ENCODE measurements at regions of chr19 and their contacts with region 1.

Region 1: DNA sequence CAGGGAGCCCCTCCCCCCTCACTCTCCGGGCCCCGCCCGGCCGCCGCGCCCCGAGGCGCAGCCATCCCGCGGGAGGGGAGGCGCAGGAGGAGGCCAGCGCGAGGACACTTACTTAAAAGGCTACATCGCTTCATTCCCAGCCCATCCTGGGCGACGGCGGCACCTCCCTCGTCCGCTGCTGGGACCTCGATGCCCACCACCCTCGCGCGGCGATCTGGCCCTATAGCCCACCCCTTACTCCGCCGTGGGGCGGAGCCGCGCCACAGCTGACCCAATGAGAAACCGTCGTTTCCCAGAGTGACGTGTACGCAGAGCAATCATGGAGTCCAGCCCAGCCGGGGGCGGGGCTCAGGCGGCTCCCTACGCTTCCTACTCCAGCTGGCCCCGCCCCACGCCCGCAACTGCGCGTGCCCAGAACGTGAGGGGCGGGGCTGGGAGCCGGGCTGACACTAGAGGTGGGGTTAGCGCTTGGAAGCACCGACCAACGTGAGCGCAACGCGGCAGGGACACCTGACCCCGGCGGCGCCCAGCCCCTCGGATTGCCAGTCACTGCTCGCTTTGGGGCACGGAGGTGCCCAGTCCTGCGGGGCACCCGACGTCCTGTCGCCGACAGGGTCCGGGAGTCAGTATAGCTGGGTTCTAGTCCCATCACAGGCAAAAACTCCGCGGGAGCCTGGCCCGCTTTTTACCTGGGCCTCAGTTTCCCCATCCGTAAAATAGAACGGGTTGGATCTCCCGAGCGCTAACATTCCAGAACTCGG is at the start of gene ANKRD27:
- DNase-seq: peak; percentile 98 to 99 (median 98)
- ATAC-seq: peak; percentile 95
- H3K4me3 ChIP-seq: peak within 1 kb of the TSS; percentile 92
- H3K27ac ChIP-seq: peak within 1 kb of the TSS; percentile 79
- H3K4me1 ChIP-seq: peaks cover 41 to 61% of the 10 kb centered on the region in 2 experiments
- H3K27me3 ChIP-seq: no peaks in the 10 kb centered on the region
- CTCF ChIP-seq: 0 out of 6 replicates have a peak, but pooled peaks of 1 of the 3 experiments have one; percentile 0
- EP300 ChIP-seq: no peak
- POLR2A ChIP-seq: peak; percentile 73
- RAD21 ChIP-seq: no peak
- polyA plus RNA-seq, gene ANKRD27: 5.3 to 7.2 TPM

Region 2: DNA sequence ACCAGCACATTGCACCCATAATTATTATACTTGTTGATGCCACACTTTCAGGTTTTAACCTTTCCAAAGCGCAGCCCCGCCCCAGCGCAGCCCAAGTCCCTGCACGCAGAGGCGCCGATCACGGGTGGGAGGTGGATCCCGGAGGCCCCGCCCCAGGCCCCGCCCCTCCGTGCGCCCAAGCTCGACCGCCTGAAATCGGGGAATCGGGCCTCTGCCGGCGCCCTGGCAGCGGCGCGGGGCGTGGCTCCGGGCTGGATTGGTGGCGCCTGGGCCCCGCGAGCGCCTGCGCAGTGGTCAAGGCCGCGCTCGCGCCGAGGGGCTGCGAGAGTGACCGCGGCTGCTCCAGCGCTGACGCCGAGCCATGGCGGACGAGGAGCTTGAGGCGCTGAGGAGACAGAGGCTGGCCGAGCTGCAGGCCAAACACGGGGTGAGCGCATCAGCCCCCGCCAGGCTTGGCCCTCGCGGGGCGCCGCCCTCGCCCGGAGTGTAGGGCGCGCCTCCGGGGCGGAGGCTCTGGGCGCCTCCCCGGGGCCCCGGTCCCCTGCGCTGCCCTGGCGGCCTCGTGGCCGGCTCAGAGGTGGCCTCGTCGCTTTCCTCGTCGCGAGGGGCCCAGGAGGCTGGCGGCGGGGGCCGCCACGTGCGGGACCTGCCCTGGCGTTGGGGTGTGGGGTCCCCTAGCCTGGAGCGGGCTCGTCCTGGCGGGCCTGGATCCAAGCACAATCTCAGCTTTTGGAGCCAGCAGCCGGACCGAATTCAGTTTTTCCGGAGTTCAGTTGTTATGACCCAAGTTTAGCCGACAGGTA is 94.0 kb before region 1 on chr19 and contains the start of gene PDCD5:
- CTCF ChIA-PET with region 1: no interaction called
- POLR2A ChIA-PET with region 1: no interaction called
- in situ Hi-C with region 1: no loop called
- intact Hi-C with region 1: loop called (anchors 5 kb)
- DNase-seq: peak; percentile 94 to 97 (median 96)
- ATAC-seq: peak; percentile 96
- H3K4me3 ChIP-seq: peak within 1 kb of the TSS; percentile 77
- H3K27ac ChIP-seq: peak within 1 kb of the TSS; percentile 88
- H3K4me1 ChIP-seq: peaks cover 6 to 16% of the 10 kb centered on the region in 2 experiments; a peak in 4 of 5 replicates
- H3K27me3 ChIP-seq: no peaks in the 10 kb centered on the region
- CTCF ChIP-seq: no peak
- EP300 ChIP-seq: no peak
- POLR2A ChIP-seq: peak; percentile 82
- RAD21 ChIP-seq: no peak
- polyA plus RNA-seq, gene PDCD5: 136 to 185 TPM

Region 3: DNA sequence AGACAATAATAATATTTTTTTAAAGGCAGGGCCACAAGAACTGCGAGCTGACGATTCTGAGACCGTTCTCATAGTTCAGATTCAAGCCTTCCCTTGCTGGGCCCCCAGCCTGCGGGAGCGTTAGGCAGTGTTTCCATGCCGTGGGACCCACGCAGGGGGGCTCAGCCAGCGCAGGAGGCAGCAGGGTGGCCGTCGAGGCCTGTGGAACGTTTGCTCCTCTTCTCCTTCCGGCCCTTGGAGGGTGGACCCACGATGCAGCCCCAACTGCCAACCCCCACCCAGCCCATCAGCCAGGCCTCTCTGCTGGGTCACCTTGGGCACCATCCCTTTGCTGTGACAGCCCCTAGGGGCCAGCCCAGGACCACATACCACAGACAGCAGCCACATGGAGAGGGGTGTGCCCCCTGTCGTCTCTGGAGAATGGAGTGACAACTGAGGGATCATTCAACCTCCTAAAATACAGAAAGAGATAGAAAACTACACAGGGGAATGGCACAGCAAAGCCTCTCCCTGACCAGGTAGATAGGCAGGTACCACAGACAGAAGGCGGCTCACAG is 47.3 kb before region 1 on chr19:
- CTCF ChIA-PET with region 1: no interaction called
- POLR2A ChIA-PET with region 1: no interaction called
- in situ Hi-C with region 1: no loop called
- intact Hi-C with region 1: loop called (anchors 1 kb)
- DNase-seq: peak in 2 of 4 experiments; percentile 9 to 27
- ATAC-seq: peak; percentile 42
- H3K4me3 ChIP-seq: no peak overlapping the region
- H3K27ac ChIP-seq: peak overlapping the region; percentile 75
- H3K4me1 ChIP-seq: peaks cover 17 to 41% of the 10 kb centered on the region in 2 experiments; a peak in 4 of 5 replicates
- H3K27me3 ChIP-seq: no peaks in the 10 kb centered on the region
- CTCF ChIP-seq: peak in 1 of 3 experiments; percentile 50; a peak in 2 of 6 replicates
- EP300 ChIP-seq: no peak
- POLR2A ChIP-seq: no peak
- RAD21 ChIP-seq: no peak

Region 4: GRCh38 chr19:32691291-32691951 is 16.3 kb after region 1 on chr19 and contains the start of gene NUDT19:
- CTCF ChIA-PET with region 1: no interaction called
- POLR2A ChIA-PET with region 1: interaction called, 11 read pairs
- in situ Hi-C with region 1: no loop called
- intact Hi-C with region 1: loop called (anchors 1 kb)
- DNase-seq: peak; percentile 79 to 90 (median 82)
- ATAC-seq: peak; percentile 88
- H3K4me3 ChIP-seq: peak within 1 kb of the TSS; percentile 73
- H3K27ac ChIP-seq: peak within 1 kb of the TSS; percentile 86
- H3K4me1 ChIP-seq: peaks cover 22 to 35% of the 10 kb centered on the region in 2 experiments; a peak in 4 of 5 replicates
- H3K27me3 ChIP-seq: no peaks in the 10 kb centered on the region
- CTCF ChIP-seq: no peak
- EP300 ChIP-seq: no peak
- POLR2A ChIP-seq: peak; percentile 84
- RAD21 ChIP-seq: no peak
- polyA plus RNA-seq, gene NUDT19: 28.2 to 38.6 TPM

Region 5: DNA sequence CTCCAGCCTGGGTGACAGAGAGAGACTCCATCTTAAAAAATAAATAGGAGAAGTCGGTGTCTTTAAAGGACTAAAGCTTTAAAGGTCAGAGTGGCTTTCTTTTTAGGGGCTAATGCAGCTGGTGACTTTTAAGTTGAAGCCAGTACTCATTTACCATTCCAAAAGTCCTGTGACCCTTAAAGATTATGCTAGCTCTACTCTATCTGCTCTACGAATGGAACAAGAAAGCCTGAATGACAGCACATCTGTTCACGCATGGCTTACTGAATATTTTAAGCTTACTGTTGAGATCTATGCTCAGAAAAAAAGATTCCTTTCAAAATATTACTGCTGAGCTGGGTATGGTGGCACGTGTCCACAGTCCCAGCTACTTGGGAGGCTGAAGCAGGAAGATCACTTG is 60.8 kb after region 1 on chr19:
- CTCF ChIA-PET with region 1: no interaction called
- POLR2A ChIA-PET with region 1: no interaction called
- in situ Hi-C with region 1: no loop called
- intact Hi-C with region 1: loop called (anchors 2 kb)
- DNase-seq: no peak
- ATAC-seq: no peak
- H3K4me3 ChIP-seq: no peak overlapping the region
- H3K27ac ChIP-seq: no peak overlapping the region
- H3K4me1 ChIP-seq: no peaks in the 10 kb centered on the region; a peak in 1 of 5 replicates
- H3K27me3 ChIP-seq: no peaks in the 10 kb centered on the region; a peak in 2 of 5 replicates
- CTCF ChIP-seq: no peak
- EP300 ChIP-seq: no peak
- POLR2A ChIP-seq: no peak
- RAD21 ChIP-seq: no peak

Measured in K562 (cell line).